HCT116 (cell line): ENCODE measurements at regions of chr18 and their contacts with region 1.

Region 1: DNA sequence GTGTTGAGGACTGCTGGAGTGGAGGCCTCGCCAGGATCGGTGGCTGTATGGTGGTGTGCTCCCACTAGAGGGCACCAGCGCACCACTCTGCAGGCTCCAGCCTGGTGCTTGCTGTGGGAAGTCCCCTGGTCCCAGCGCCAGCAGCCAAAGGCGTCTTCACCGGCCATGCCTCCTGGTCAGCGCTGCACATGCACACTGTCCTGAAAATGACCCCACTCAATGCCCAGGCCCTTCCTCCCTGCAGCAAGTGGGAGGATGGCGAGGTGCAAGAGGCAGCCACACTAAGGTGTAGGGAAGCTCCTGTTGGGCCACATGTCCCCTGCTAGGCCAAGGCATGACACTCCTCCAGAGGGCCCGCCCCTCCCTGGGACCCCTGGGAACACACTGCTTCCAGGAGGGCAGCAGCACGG is 136.5 kb downstream of the CTIF start:
- DNase-seq: peak; percentile 51
- ATAC-seq: peak; percentile 95
- H3K4me3 ChIP-seq: no peak overlapping the region
- H3K27ac ChIP-seq: no peak overlapping the region; the same call in 1 of the 2 replicates
- H3K4me1 ChIP-seq: peaks cover 0 to 7% of the 10 kb centered on the region in 2 experiments; a peak in 2 of 4 replicates
- H3K27me3 ChIP-seq: no peaks in the 10 kb centered on the region
- CTCF ChIP-seq: peak; percentile 74 to 93 (median 89)
- POLR2A ChIP-seq: no peak
- RAD21 ChIP-seq: peak; percentile 93

Region 2: DNA sequence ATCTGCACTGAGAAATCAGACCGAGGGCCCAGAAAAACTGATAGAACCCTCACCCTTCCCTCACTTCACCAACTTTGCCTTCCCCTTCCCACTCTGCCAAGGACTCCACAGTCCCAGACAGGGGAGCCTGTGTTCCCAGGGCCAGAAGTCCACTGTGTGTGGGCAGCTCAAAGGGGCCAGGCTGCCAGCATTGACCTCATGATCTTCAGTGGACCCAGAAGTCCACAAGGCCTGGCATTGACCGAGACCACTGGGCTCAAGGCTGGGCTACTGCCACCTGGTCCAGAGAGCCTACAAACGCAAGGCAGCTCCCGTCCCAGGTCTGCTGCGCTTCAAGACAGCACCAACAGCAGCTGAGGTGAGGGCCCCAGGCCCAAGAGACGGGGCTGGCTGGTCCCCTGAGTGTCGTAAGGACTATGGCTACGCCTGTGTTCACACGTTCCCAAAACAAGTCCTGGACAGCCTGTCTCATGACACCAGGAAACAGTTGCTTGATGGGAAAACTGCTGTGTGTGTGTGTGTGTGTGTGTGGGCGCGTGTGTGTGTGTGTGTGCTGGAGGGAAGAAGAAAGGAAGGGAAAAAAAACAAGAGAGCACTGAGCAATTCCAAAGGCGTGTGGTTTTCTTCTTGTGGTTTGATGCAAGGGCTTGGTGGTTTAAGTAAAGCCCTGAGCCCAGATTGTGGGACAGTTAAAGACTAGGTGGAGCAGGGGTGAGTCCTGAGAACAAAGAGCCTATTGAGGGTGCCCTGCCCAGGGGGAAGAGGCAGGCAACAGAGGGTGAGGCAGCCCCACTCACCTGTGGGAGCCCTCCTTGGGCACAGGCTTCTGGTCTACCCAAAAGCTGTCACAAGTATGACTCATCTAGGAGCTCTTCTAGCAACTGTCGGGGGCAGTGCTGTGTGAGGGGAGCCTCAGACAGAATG is 219.5 kb before region 1 on chr18:
- CTCF ChIA-PET with region 1: no interaction called
- POLR2A ChIA-PET with region 1: no interaction called
- RAD21 ChIA-PET with region 1: no interaction called
- intact Hi-C with region 1: no loop called
- DNase-seq: peak; percentile 83
- ATAC-seq: peak; percentile 95
- H3K4me3 ChIP-seq: no peak overlapping the region
- H3K27ac ChIP-seq: no peak overlapping the region
- H3K4me1 ChIP-seq: peaks cover 14 to 15% of the 10 kb centered on the region in 2 experiments; a peak in 3 of 4 replicates
- H3K27me3 ChIP-seq: peaks cover 20% of the 10 kb centered on the region; the same call in 1 of the 2 replicates
- CTCF ChIP-seq: no peak
- POLR2A ChIP-seq: no peak
- RAD21 ChIP-seq: no peak

Region 3: DNA sequence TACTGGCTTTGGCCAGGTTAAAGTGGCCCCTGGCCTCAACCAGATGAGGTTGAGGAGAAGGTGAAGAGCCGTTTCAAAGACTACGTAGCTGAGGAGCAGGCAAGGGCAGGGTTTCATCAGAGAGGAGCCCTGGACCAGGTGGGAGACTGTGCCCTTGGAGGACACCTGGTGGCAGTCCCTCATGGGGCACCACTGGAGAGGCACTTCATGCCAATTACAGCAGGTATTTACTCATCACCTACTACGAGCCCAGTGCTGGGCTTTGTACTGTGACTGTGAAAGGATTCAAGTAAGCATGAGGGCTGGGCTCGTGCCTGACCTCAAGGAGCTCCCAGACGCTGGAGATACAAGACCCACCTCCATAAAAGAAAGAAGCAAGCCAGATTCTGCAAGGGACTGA is 237.8 kb after region 1 on chr18:
- CTCF ChIA-PET with region 1: no interaction called
- POLR2A ChIA-PET with region 1: no interaction called
- RAD21 ChIA-PET with region 1: no interaction called
- intact Hi-C with region 1: loop called (anchors 5 kb)
- DNase-seq: no peak
- ATAC-seq: peak; percentile 92
- H3K4me3 ChIP-seq: no peak overlapping the region
- H3K27ac ChIP-seq: no peak overlapping the region
- H3K4me1 ChIP-seq: no peaks in the 10 kb centered on the region; a peak in 1 of 4 replicates
- H3K27me3 ChIP-seq: no peaks in the 10 kb centered on the region
- CTCF ChIP-seq: peak; percentile 45 to 67 (median 53); a peak in 5 of 6 replicates
- POLR2A ChIP-seq: no peak
- RAD21 ChIP-seq: peak; percentile 77

Region 4: DNA sequence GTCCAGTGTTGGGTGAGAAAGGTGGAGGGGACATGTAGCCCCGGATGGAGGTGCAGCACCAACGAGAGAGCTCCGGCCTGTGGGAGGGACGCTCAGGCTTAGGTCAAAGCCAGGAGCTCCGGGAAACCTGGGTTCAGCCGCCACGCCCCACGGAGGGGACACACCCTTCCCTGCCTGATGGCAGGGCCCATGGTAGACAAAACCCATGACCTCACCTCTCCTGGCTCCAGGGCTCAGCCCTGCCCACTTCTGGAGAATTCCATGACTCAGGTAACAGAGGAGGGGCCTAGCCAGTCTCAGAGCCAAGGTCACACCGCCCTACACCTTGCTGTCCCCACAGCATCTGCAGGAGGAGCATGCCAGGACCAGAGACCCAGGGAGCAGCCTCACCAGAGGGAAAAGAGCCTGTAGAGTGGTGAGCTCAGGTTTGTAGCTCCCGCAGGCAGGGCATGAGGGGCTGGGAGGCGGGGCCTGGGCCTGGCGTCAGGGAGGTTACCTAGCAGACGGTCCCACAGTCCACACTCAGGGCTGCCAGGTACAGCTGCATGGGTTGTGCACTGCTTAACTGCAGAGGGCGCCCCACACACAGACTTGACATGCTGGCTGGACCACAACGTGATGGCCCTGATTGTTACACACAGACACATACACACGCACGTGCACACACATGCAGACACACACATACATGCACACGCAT is 346.2 kb after region 1 on chr18:
- CTCF ChIA-PET with region 1: no interaction called
- POLR2A ChIA-PET with region 1: no interaction called
- RAD21 ChIA-PET with region 1: no interaction called
- intact Hi-C with region 1: loop called (anchors 2 kb)
- DNase-seq: peak; percentile 83
- ATAC-seq: peak; percentile 89
- H3K4me3 ChIP-seq: peak overlapping the region; percentile 33 to 51
- H3K27ac ChIP-seq: peak overlapping the region; percentile 55; the same call in 1 of the 2 replicates
- H3K4me1 ChIP-seq: peaks cover 31 to 42% of the 10 kb centered on the region in 2 experiments
- H3K27me3 ChIP-seq: no peaks in the 10 kb centered on the region
- CTCF ChIP-seq: peak in 2 of 3 experiments; percentile 79 to 82; a peak in 4 of 6 replicates
- POLR2A ChIP-seq: no peak
- RAD21 ChIP-seq: no peak

Region 5: GRCh38 chr18:49178736-49179135 is 503.4 kb after region 1 on chr18:
- CTCF ChIA-PET with region 1: no interaction called
- POLR2A ChIA-PET with region 1: no interaction called
- RAD21 ChIA-PET with region 1: no interaction called
- intact Hi-C with region 1: loop called (anchors 1 kb)
- DNase-seq: peak; percentile 19
- ATAC-seq: peak; percentile 73
- H3K4me3 ChIP-seq: no peak overlapping the region
- H3K27ac ChIP-seq: no peak overlapping the region
- H3K4me1 ChIP-seq: peaks cover 9% of the 10 kb centered on the region in 2 experiments; a peak in 2 of 4 replicates
- H3K27me3 ChIP-seq: no peaks in the 10 kb centered on the region
- CTCF ChIP-seq: peak; percentile 55 to 74 (median 69); a peak in 5 of 6 replicates
- POLR2A ChIP-seq: no peak
- RAD21 ChIP-seq: peak; percentile 73

Region 6: DNA sequence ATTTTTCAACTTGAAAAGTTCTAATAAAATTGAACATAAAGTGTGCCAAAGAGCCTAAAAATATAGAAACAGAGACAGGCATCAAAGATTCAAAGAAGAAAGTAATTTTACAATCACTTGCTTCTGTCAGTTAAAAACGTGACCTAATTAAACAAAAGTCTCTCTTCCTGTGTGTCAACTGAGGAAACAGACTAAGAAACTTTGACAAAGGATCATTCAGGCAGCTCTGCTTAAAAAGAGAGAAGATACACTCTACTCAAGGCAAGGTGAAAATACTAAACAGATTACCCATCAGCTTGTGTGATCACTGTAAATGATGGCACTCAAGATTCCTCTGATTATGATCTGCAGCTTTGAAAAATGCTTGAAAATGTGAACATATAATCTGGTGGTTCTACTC is 737.3 kb after region 1 on chr18:
- CTCF ChIA-PET with region 1: no interaction called
- POLR2A ChIA-PET with region 1: no interaction called
- RAD21 ChIA-PET with region 1: no interaction called
- intact Hi-C with region 1: loop called (anchors 1 kb)
- DNase-seq: no peak
- ATAC-seq: no peak
- H3K4me3 ChIP-seq: no peak overlapping the region
- H3K27ac ChIP-seq: no peak overlapping the region
- H3K4me1 ChIP-seq: peaks cover 0 to 4% of the 10 kb centered on the region in 2 experiments; a peak in 2 of 4 replicates
- H3K27me3 ChIP-seq: no peaks in the 10 kb centered on the region
- CTCF ChIP-seq: no peak
- POLR2A ChIP-seq: no peak
- RAD21 ChIP-seq: no peak

Region 7: DNA sequence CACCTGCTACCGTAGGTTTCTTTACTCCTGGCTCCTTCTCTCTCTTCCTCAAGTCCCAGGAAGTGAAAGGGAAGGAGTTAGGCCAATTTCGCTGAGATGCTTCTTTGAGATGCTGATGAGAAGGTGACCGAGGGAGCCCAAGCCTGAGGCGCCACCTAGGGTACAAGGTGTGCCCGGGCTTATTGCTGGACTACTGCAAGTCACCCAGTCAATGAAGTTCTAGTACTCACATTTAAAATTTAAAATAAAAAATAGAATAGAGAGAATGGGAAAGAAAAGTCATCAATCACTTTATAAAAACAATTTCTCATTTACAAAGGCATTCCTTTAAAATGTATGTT is 1092.7 kb after region 1 on chr18:
- CTCF ChIA-PET with region 1: no interaction called
- POLR2A ChIA-PET with region 1: no interaction called
- RAD21 ChIA-PET with region 1: no interaction called
- intact Hi-C with region 1: loop called (anchors 10 kb)
- DNase-seq: peak; percentile 62
- ATAC-seq: peak; percentile 94
- H3K4me3 ChIP-seq: no peak overlapping the region
- H3K27ac ChIP-seq: no peak overlapping the region
- H3K4me1 ChIP-seq: no peaks in the 10 kb centered on the region
- H3K27me3 ChIP-seq: no peaks in the 10 kb centered on the region
- CTCF ChIP-seq: peak; percentile 74 to 83 (median 77); a peak in 5 of 6 replicates
- POLR2A ChIP-seq: no peak
- RAD21 ChIP-seq: peak; percentile 94

Region 8: DNA sequence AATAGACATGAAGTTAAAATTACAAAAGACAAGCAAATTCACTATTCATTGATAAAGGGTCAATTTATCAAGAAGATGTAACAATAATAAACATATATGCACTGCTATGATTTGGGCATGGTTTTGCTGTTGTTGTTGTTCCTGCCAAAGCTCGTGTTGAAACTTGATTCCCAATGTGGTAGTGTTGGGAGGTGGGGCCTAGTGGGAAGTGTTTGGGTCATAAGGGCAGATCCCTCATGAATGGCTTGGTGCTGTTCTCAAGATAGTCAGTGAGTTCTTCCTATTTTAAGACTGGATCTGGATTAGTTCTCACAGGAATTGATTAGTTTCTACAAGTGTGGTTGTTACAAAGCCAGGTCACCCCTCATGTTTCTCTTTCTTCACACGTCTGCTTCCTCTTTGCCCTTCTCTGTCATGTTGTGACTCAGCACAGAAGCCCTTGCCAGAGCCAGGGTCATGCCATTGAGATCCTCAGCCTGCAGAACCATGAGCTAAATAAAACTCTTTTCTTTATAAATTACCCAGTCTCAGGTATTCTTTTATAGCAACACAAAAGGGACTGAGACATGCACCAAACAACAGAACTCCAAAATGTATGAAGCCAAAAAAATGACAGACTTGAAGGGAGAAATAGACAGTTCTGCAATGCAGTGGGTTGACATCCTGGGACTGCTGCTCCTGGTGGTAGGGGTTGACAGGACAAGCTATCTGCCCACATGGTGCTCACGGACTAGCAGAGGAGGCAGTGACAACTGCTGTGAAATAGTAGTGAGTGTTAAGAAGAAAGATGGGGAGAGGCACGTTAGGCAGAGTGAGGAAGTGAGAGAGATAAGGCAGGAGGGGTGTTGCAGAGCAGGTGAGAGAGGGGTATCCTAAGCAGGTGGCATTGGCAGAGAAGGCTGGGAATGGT is 1680.9 kb after region 1 on chr18:
- CTCF ChIA-PET with region 1: no interaction called
- POLR2A ChIA-PET with region 1: no interaction called
- RAD21 ChIA-PET with region 1: no interaction called
- intact Hi-C with region 1: loop called (anchors 5 kb)
- DNase-seq: peak; percentile 28
- ATAC-seq: peak; percentile 83
- H3K4me3 ChIP-seq: no peak overlapping the region
- H3K27ac ChIP-seq: peak overlapping the region; percentile 29
- H3K4me1 ChIP-seq: peaks cover 14 to 15% of the 10 kb centered on the region in 2 experiments
- H3K27me3 ChIP-seq: no peaks in the 10 kb centered on the region
- CTCF ChIP-seq: peak in 2 of 3 experiments; percentile 35 to 36; a peak in 2 of 6 replicates
- POLR2A ChIP-seq: no peak
- RAD21 ChIP-seq: no peak; the same call in 1 of the 2 replicates